Activated CD4-positive, alpha-beta T cell treated with anti-CD3 and anti-CD28 coated beads, Interleukin-2, amount 10 ng/mL, durations not matched to agents 24 days and 14 days (primary cell): ENCODE measurements at regions of chr5 and their contacts with region 1.

Region 1: DNA sequence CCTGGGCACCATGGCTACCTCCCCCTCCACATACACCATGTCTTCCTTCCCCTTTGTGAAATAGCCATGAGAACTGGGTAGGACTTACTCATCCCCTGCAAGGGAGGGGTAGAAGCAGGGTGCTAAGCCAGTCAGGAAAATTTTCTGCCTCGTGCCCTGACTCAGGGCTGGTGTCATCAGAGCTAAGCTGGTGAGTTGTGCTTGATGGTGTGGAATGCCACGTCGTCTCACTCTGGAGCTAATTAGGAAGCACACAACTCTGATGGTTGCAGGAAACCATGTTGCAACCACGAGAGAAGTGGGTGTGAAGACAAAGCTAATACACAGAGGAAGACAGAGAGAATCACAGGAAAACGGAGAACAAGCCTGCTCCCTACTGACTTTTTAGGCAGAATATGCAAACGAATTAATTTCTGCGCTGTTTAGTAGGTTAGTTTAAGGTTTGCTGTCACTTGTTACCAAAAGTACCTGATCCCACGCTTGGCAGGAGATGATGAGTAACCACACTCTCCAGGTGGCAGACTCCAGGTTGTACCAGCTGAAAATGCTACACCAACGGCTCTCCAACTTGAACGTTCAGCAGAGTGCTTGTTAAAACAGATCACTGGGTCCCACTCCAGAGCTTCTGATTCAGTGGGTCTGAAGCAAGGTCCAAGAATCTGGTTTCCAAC is 54.5 kb downstream of the STK10 start:
- DNase-seq: no peak
- H3K4me3 Mint-ChIP-seq: peak overlapping the region; percentile 59
- H3K27ac Mint-ChIP-seq: peak overlapping the region; percentile 95
- H3K4me1 Mint-ChIP-seq: peaks cover 42% of the 10 kb centered on the region
- H3K27me3 Mint-ChIP-seq: no peaks in the 10 kb centered on the region

Region 2: GRCh38 chr5:172179361-172179989 is 46.0 kb after region 1 on chr5:
- intact Hi-C with region 1: loop called (anchors 2 kb)
- DNase-seq: peak; percentile 88
- H3K4me3 Mint-ChIP-seq: peak overlapping the region; percentile 90
- H3K27ac Mint-ChIP-seq: peak overlapping the region; percentile 96
- H3K4me1 Mint-ChIP-seq: peaks cover 78% of the 10 kb centered on the region
- H3K27me3 Mint-ChIP-seq: no peaks in the 10 kb centered on the region